ENCODE measurements at regions of chr20 and their contacts with region 1.

Region 1: DNA sequence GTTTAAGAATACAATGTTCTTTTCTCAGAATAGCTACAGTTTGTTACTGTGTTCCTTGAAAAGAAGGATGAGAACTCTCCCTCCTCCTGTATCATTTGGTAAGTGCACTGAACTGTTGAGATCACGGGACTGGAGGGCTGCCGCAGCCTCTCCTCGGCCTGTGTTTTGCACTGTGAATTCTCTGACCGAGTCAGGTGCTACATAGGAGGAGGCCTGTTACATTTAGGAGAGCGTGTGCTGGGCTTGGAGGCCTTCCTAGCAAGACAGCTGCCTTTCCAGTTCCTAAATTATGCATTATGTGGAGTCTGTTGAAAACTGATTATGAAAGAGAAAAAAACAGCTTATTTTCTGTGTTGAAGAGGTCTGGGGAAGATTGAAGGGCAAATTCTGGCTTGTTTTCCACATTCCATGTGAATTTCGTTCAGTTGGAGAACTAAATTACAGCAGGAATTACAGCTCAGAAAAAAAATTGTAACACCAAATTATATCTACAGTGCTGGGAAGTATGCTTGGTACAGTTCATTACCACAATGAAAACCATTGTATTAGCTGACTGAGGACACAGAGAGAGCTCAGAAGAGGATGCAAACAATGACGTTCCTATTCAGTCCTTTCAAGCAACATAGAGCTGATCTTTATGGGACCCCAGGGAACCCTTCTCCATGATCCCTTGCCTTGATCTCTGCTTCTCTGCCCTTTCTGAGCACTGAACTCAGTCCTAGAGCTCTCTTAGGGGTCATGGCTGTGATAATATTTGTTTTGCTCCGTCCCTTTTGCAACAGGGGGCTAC is 2.8 kb downstream of the TMC2 start:
- DNase-seq: no peak
- ATAC-seq: no peak
- H3K4me3 ChIP-seq: no peak overlapping the region
- H3K27ac ChIP-seq: no peak overlapping the region
- H3K4me1 ChIP-seq: no peaks in the 10 kb centered on the region; the same call in 1 of the 2 replicates
- H3K27me3 ChIP-seq: peaks cover 6% of the 10 kb centered on the region
- CTCF ChIP-seq: no peak

Region 2: DNA sequence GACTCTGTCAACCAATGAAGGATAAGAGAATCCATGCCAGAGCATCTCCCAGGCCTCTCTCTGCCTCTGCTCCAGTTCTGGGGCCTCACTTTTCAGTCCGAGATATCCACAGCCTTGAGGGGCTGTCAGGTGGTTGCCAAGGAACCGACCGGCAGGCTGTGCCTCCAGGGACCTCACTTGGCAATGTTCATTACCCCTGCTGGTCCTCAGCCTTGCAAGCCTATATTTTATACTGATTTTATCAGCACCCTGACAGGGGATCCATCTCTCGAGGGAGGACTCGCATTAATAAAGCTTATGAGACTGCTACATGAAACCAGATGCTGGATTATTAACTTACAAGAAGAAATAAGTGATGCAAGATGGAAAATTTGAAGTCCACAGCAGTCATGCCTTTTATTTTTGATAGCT is 37.2 kb after region 1 on chr20:
- CTCF ChIA-PET with region 1: no interaction called
- POLR2A ChIA-PET with region 1: interaction called, 12 read pairs
- in situ Hi-C with region 1: no loop called
- intact Hi-C with region 1: no loop called
- DNase-seq: no peak
- ATAC-seq: no peak
- H3K4me3 ChIP-seq: no peak overlapping the region
- H3K27ac ChIP-seq: no peak overlapping the region
- H3K4me1 ChIP-seq: no peaks in the 10 kb centered on the region
- H3K27me3 ChIP-seq: peaks cover 14% of the 10 kb centered on the region
- CTCF ChIP-seq: no peak

Measured in Panc1 (cell line).